ENCODE measurements at regions of chr13 and their contacts with region 1.

Region 1: DNA sequence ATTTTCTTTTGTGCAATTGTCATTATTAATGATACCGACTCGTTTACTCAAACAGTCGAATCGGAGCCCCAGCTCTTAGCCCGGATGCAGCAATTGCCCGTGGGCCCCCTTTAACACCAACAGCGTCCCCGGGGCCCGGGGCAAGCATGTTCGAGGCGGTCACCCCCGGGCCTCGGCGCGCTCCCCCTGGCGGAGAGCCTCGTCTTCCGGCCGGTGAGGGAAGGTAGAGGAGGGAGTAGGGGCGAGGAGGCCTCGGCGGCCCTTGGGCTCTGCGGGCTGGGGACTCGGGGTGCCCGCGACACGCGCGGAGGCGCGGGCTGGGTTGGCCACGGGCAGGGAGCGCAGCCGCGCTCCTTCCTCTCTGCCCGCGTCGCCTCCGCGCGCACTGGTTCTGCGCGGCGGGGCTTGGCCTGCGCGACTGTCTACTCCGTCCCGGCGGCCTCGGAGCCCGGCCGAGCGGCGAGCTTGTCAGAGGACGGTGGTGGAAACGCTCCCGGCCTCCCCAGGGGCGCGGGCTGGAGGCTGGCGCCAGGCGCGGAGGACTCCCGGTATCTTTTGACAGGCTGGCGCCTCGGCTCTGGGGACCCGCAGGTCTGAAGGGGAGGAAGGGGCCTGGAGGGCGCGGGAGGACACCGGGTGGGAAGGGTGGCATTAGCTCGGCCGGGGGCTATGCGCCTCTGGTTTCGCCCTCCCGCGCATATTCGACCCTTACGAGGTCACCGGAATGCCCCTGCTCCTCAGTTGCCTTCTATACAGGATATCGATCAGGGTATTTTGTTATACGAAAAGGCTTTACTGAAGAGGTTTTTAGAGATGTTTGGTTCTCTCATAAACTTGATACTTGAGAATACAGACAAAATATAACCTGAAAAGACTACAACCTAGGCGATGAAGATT is 1.5 kb downstream of the BIVM start:
- DNase-seq: peak; percentile 95
- H3K4me3 ChIP-seq: peak overlapping the region; percentile 81 to 86
- H3K27ac ChIP-seq: peak overlapping the region; percentile 61 to 79
- H3K4me1 ChIP-seq: peaks cover 0 to 8% of the 10 kb centered on the region in 2 experiments; a peak in 2 of 4 replicates
- H3K27me3 ChIP-seq: no peaks in the 10 kb centered on the region
- CTCF ChIP-seq: peak; percentile 73
- EP300 ChIP-seq: no peak
- RAD21 ChIP-seq: peak; percentile 33; the same call in 1 of the 2 replicates

Region 2: DNA sequence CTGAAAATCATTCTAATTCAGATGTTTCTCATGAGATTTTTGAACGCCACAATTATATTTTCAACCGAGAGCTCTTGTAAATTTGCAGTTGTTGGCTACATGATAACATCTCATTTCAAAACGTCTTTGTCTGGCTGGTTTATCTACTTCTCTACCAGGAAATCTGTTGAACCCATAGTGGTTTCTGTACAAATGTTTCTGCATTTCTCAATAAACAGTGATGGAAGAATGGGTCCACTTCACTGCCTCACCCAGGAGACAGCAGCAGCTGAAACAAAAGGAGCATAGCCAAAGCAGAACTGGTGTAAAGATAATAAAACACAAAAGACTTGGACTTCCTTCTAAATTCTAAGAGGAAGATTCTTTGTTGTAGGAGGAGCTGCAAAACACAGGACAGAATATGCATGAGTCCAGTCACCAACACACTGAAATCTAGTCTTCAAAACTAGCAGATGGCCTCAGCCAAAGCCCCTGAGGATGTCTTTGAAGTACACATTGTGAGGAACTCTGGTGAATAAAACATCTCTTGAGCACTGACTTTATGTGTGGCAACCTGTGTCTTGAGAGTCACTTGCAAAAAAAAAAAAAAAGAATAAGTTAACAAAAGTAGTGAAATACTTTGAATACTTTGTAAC is 330.0 kb before region 1 on chr13:
- CTCF ChIA-PET with region 1: no interaction called
- POLR2A ChIA-PET with region 1: no interaction called
- DNase-seq: no peak
- H3K4me3 ChIP-seq: no peak overlapping the region
- H3K27ac ChIP-seq: no peak overlapping the region
- H3K4me1 ChIP-seq: peaks cover 0 to 3% of the 10 kb centered on the region in 2 experiments; a peak in 1 of 4 replicates
- H3K27me3 ChIP-seq: no peaks in the 10 kb centered on the region
- CTCF ChIP-seq: no peak
- EP300 ChIP-seq: no peak
- RAD21 ChIP-seq: no peak

Region 3: DNA sequence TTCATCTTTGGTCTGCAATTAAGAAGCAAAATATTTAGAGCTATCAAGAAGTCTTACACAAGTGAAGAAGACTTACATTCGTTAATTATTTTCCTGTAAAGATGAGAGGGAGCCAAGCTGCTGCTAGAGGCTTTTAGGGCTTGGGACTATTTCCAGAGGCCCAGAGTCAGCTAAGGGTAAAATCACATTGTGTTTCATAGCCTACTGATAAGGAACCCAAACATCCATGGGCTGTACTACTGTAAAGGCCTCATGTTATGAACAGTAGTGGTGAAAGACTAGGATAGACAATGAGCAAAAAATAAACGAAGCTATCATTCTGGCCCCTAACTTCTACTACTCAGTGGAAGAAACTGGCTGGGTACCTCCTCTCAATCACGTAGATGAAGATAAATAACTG is 15.9 kb before region 1 on chr13:
- CTCF ChIA-PET with region 1: interaction called, 11 read pairs
- POLR2A ChIA-PET with region 1: interaction called, 3 read pairs
- DNase-seq: no peak
- H3K4me3 ChIP-seq: no peak overlapping the region
- H3K27ac ChIP-seq: no peak overlapping the region
- H3K4me1 ChIP-seq: no peaks in the 10 kb centered on the region
- H3K27me3 ChIP-seq: no peaks in the 10 kb centered on the region
- CTCF ChIP-seq: no peak
- EP300 ChIP-seq: no peak
- RAD21 ChIP-seq: no peak

Region 4: GRCh38 chr13:102814025-102814607 is 13.7 kb after region 1 on chr13:
- CTCF ChIA-PET with region 1: interaction called, 10 read pairs
- POLR2A ChIA-PET with region 1: no interaction called
- DNase-seq: no peak
- H3K4me3 ChIP-seq: no peak overlapping the region
- H3K27ac ChIP-seq: no peak overlapping the region
- H3K4me1 ChIP-seq: peaks cover 4 to 16% of the 10 kb centered on the region in 2 experiments; a peak in 3 of 4 replicates
- H3K27me3 ChIP-seq: no peaks in the 10 kb centered on the region
- CTCF ChIP-seq: no peak
- EP300 ChIP-seq: no peak
- RAD21 ChIP-seq: no peak